Heart right ventricle (tissue), 16 donors: ENCODE measurements at regions of chr12 and their contacts with region 1.

Region 1: GRCh38 chr12:124493809-124494750 is 73.3 kb downstream of the NCOR2 start:
- DNase-seq: peak in 1 of 2 donors; percentile 15
- ATAC-seq: no peak
- H3K4me3 ChIP-seq: no peak overlapping the region
- H3K27ac ChIP-seq: no peak overlapping the region
- H3K4me1 ChIP-seq: peaks cover 25 to 99% (median 77%) of the 10 kb centered on the region in 9 donors
- H3K27me3 ChIP-seq: no peaks in the 10 kb centered on the region
- CTCF ChIP-seq: no peak

Region 2: GRCh38 chr12:124208481-124208880 is 285.6 kb before region 1 on chr12:
- intact Hi-C with region 1: no loop called
- DNase-seq: no peak
- ATAC-seq: peak in 2 of 8 donors; percentile 28 to 41
- H3K4me3 ChIP-seq: peak overlapping the region in 1 of 10 donors; percentile 15
- H3K27ac ChIP-seq: no peak overlapping the region
- H3K4me1 ChIP-seq: peaks cover 0 to 5% (median 0%) of the 10 kb centered on the region in 9 donors
- H3K27me3 ChIP-seq: peaks cover 0 to 31% (median 3%) of the 10 kb centered on the region in 7 donors
- CTCF ChIP-seq: no peak

Region 3: DNA sequence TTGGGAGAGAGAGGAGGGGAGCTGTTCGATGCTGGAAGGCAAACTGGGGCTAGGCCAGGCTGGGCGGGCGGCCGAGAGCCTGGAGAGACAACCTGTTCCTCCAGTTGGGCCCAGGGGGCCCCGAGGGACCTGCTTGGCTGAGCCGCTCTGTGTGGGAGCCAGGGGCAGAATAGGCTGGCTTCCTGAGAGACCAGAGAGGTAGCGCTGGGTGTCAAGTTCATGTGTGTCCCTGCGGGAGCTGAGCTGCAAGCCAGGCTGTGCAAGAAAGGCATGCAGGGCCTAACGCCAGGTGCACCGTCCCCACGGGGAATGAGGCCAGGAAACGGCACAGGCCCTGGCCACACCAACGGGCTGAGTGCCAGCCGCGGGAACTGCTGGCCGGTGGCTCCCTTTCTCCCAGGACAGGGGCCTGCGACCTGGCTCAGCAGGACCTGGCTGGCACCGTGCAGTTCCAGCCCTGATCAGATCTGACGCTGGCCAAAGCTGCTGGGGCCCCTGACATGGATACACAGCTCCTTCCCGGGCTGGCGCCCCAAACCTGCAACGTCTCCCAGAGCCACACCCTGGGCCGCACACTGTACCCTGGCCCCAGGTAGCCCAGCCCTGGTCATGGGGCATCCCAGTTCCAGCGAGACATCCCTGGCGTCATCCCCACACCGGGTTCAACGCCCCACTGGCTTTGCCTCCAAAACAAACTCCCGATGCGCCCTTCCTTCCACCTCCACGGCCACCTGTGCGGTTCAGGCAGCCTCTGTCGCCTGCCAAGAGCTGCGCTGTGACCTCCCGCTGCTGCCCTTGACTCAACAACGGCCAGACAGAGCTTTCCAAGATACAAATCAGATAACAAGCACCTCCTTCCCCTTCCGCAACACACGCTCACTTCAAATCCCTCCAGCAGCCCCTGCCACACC is 134.2 kb before region 1 on chr12:
- intact Hi-C with region 1: no loop called
- DNase-seq: peak; percentile 88 to 94
- ATAC-seq: peak; percentile 72 to 96 (median 85)
- H3K4me3 ChIP-seq: no peak overlapping the region
- H3K27ac ChIP-seq: peak overlapping the region; percentile 21 to 81 (median 70)
- H3K4me1 ChIP-seq: peaks cover 31 to 69% (median 60%) of the 10 kb centered on the region in 9 donors
- H3K27me3 ChIP-seq: no peaks in the 10 kb centered on the region
- CTCF ChIP-seq: peak in 1 of 9 donors; percentile 16

Region 4: GRCh38 chr12:124379938-124380754 is 113.9 kb before region 1 on chr12:
- intact Hi-C with region 1: loop called in 1 of 10 experiments (anchors 5 kb)
- DNase-seq: peak; percentile 62 to 78
- ATAC-seq: peak; percentile 36 to 69 (median 59)
- H3K4me3 ChIP-seq: peak overlapping the region in 2 of 10 donors; percentile 9 to 23
- H3K27ac ChIP-seq: peak overlapping the region; percentile 82 to 99 (median 87)
- H3K4me1 ChIP-seq: peaks cover 38 to 70% (median 54%) of the 10 kb centered on the region in 9 donors
- H3K27me3 ChIP-seq: no peaks in the 10 kb centered on the region
- CTCF ChIP-seq: peak; percentile 29 to 73 (median 61)

Region 5: DNA sequence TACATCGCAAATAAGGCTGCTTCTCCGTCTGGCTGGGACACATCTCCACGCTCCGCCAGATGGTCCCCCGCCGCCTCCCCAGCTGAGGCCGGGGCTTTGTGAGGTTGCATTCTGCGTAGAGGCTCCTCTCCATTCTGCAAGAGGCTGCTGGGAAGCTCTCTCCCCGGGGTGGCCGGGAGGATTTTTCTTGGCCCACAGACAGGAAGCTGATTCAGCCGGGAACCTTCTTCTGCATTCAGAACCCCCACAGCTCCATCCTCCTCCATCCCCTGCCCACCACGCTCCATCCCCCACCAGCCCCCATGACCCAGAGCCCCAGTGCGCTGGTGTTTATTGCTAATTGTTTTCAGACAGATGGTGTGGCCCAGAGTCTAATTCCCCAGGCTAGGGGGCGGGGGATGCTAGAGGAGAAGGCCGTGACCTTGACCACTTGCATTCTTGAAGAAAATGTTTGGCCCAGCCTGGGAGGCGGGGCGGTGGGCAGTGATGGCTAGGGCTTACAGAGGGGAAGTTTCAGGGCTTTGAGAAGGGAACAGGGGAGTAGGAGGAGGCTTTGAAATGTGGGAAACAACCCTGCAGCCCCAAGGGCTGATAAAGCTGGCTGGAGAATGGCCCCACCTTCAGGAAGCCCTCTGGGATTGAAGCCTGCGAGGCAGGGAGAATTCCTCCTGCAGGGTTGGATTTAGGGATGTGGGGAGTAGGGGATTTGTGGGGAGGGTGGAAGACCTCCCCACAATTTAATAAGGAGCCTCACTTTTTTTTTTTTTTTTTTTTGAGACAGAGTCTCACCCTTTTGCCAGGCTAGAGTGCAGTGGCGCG is 161.8 kb after region 1 on chr12:
- intact Hi-C with region 1: loop called in 1 of 10 experiments (anchors 10 kb)
- DNase-seq: peak; percentile 80 to 87
- ATAC-seq: peak; percentile 77 to 84 (median 83)
- H3K4me3 ChIP-seq: peak overlapping the region in 7 of 10 donors; percentile 13 to 38 (median 30)
- H3K27ac ChIP-seq: peak overlapping the region; percentile 68 to 96 (median 86)
- H3K4me1 ChIP-seq: peaks cover 24 to 61% (median 56%) of the 10 kb centered on the region in 9 donors
- H3K27me3 ChIP-seq: no peaks in the 10 kb centered on the region
- CTCF ChIP-seq: peak in 1 of 9 donors; percentile 14